PC-9 (cell line): ENCODE measurements at regions of chr5 and their contacts with region 1.

Region 1: GRCh38 chr5:143968011-143968878 is 156.3 kb downstream of the HMHB1 start:
- DNase-seq: peak; percentile 21 to 79
- H3K4me3 ChIP-seq: no peak overlapping the region
- H3K27ac ChIP-seq: peak overlapping the region; percentile 47; the same call in 1 of the 2 replicates
- H3K4me1 ChIP-seq: peaks cover 46% of the 10 kb centered on the region
- H3K27me3 ChIP-seq: no peaks in the 10 kb centered on the region
- CTCF ChIP-seq: peak; percentile 68

Region 2: GRCh38 chr5:143896966-143897365 is 71.3 kb before region 1 on chr5:
- CTCF ChIA-PET with region 1: no interaction called
- POLR2A ChIA-PET with region 1: no interaction called
- intact Hi-C with region 1: no loop called
- DNase-seq: no peak
- H3K4me3 ChIP-seq: no peak overlapping the region
- H3K27ac ChIP-seq: no peak overlapping the region
- H3K4me1 ChIP-seq: peaks cover 19% of the 10 kb centered on the region; the same call in 1 of the 2 replicates
- H3K27me3 ChIP-seq: no peaks in the 10 kb centered on the region
- CTCF ChIP-seq: no peak

Region 3: GRCh38 chr5:143923634-143924255 is 44.5 kb before region 1 on chr5:
- CTCF ChIA-PET with region 1: interaction called, 17 read pairs
- POLR2A ChIA-PET with region 1: no interaction called
- intact Hi-C with region 1: loop called (anchors 5 kb)
- DNase-seq: no peak
- H3K4me3 ChIP-seq: no peak overlapping the region
- H3K27ac ChIP-seq: peak overlapping the region; percentile 85; the same call in 1 of the 2 replicates
- H3K4me1 ChIP-seq: peaks cover 47% of the 10 kb centered on the region
- H3K27me3 ChIP-seq: no peaks in the 10 kb centered on the region
- CTCF ChIP-seq: no peak